MCF 10A (cell line): ENCODE measurements at regions of chr6 and their contacts with region 1.

Region 1: DNA sequence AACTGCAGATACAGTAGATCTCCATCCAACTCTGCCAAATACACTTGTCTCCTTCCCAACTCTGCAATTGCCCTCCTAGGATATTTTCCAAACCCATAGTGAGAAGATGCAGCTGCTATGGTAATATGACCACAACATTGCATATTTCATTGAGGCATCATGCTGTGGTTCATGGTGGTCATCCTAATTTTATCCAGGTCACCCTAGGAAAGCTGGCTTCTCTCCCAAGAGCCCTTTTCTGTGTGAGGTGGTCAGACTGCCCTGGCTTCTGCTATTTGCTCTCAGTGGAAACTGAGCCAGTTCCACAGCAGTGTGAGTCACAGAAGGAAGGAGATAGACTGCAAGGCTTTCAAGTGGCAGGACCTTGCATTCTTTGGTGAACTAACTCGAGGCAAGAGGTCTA is 5.5 kb downstream of the OGFRL1 start:
- DNase-seq: peak; percentile 21
- H3K4me3 Mint-ChIP-seq: no peak overlapping the region
- H3K27ac Mint-ChIP-seq: peak overlapping the region; percentile 29
- H3K4me1 Mint-ChIP-seq: peaks cover 28% of the 10 kb centered on the region
- H3K27me3 Mint-ChIP-seq: no peaks in the 10 kb centered on the region
- CTCF ChIP-seq: no peak

Region 2: GRCh38 chr6:71349395-71349794 is 55.3 kb after region 1 on chr6:
- CTCF ChIA-PET with region 1: interaction called, 3 read pairs
- POLR2A ChIA-PET with region 1: no interaction called
- intact Hi-C with region 1: loop called (anchors 5 kb)
- DNase-seq: peak; percentile 33
- H3K4me3 Mint-ChIP-seq: no peak overlapping the region
- H3K27ac Mint-ChIP-seq: no peak overlapping the region
- H3K4me1 Mint-ChIP-seq: no peaks in the 10 kb centered on the region
- H3K27me3 Mint-ChIP-seq: no peaks in the 10 kb centered on the region
- CTCF ChIP-seq: peak; percentile 71